Caco-2 (cell line): ENCODE measurements at regions of chr10 and their contacts with region 1.

Region 1: DNA sequence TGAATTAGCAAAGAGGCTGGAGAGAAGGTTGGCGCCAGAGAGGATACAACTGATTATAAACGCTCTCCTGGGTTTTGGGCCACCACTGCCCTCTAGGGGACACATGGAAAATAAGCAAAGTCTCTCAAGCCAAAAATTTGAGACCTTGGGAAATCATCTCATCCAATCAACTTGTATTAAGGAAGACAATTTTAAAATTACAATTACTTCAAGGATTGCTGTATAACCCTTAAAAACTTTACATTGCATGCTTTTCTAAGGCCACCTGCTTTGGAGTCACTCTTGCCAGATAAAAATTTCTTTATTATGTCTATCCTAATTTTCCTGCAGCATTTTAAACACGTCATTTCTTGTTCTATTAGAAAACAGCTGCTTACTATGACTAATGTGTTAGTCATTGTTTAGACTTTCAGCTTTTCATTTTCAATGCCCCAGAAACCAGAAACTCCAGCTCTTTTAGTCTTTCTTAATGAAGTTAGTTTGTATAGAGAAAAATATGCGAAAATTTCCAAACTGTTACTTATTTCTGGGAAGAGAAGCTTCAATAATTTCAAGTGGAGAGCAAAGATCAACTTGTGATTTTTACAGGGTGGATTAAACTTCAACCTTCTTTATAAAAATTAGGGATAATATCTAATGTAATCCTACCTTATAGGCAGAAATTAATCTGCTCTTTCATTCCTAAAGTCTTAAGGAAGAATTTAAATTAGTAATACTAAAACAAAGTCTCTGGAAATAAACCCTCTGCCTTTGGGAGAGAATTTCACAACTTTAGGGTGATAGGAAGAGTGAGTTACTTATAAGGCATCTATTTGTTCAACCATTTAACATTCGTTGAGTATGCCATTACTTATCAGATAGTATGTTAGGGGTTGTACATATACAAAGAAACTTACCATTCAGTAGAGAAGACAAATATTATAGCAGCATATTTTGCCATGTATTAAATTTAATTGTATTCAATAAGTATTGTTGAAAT is 20.6 kb upstream of the RHOBTB1 start:
- DNase-seq: peak; percentile 70 to 78
- H3K4me3 ChIP-seq: no peak overlapping the region
- H3K4me3 Mint-ChIP-seq: no peak overlapping the region
- H3K27ac Mint-ChIP-seq: no peak overlapping the region
- H3K4me1 ChIP-seq: no peaks in the 10 kb centered on the region
- H3K4me1 Mint-ChIP-seq: no peaks in the 10 kb centered on the region
- H3K27me3 ChIP-seq: no peaks in the 10 kb centered on the region
- H3K27me3 Mint-ChIP-seq: peaks cover 2% of the 10 kb centered on the region
- CTCF ChIP-seq: peak; percentile 96 to 98

Region 2: DNA sequence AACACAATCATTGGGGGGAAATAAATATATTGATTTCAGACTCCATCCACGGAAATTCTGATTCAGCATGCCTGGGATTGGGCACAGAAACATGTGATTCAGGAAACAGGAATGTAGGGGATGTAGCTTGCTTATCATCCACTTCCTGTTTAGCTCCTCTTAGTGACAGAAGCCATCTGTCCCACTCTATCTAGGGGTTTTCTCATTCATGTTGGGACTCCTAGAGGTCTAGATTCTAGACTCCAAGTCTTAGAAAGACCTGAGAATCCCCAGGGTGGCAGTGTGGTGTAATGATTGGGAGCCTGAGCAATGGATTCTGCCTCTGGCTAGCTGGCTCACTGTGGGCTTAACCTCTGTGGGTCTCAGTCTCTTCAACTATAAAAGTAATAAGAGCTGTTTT is 118.4 kb before region 1 on chr10:
- CTCF ChIA-PET with region 1: interaction called, 4 read pairs
- POLR2A ChIA-PET with region 1: no interaction called
- intact Hi-C with region 1: loop called (anchors 1 kb)
- DNase-seq: no peak
- H3K4me3 ChIP-seq: no peak overlapping the region
- H3K4me3 Mint-ChIP-seq: no peak overlapping the region
- H3K27ac Mint-ChIP-seq: no peak overlapping the region
- H3K4me1 ChIP-seq: no peaks in the 10 kb centered on the region
- H3K4me1 Mint-ChIP-seq: no peaks in the 10 kb centered on the region
- H3K27me3 ChIP-seq: no peaks in the 10 kb centered on the region; the same call in 1 of the 2 replicates
- H3K27me3 Mint-ChIP-seq: peaks cover 3% of the 10 kb centered on the region
- CTCF ChIP-seq: no peak

Region 3: DNA sequence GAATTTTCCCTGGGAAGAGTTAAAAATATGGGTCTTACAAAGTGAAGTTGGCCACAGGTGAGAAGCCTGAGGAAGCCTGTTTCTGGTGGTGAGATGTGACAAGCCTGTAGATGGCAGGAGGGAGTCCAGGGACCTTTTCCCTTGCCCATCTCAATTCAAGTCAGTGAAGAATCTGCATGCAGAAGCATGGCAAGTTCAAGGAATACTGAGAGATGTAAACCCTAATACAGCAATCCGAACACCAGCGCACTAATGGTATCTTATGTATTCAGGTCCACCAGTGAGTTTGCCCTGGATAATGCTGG is 94.2 kb before region 1 on chr10:
- CTCF ChIA-PET with region 1: no interaction called
- POLR2A ChIA-PET with region 1: no interaction called
- intact Hi-C with region 1: loop called (anchors 1 kb)
- DNase-seq: peak in 1 of 2 experiments; percentile 35
- H3K4me3 ChIP-seq: no peak overlapping the region
- H3K4me3 Mint-ChIP-seq: no peak overlapping the region
- H3K27ac Mint-ChIP-seq: no peak overlapping the region
- H3K4me1 ChIP-seq: no peaks in the 10 kb centered on the region
- H3K4me1 Mint-ChIP-seq: no peaks in the 10 kb centered on the region
- H3K27me3 ChIP-seq: no peaks in the 10 kb centered on the region
- H3K27me3 Mint-ChIP-seq: peaks cover 4% of the 10 kb centered on the region
- CTCF ChIP-seq: peak; percentile 44 to 73

Region 4: GRCh38 chr10:60883187-60883586 is 81.4 kb before region 1 on chr10:
- CTCF ChIA-PET with region 1: interaction called, 3 read pairs
- POLR2A ChIA-PET with region 1: no interaction called
- intact Hi-C with region 1: loop called (anchors 1 kb)
- DNase-seq: peak; percentile 54 to 64
- H3K4me3 ChIP-seq: no peak overlapping the region
- H3K4me3 Mint-ChIP-seq: no peak overlapping the region
- H3K27ac Mint-ChIP-seq: no peak overlapping the region
- H3K4me1 ChIP-seq: no peaks in the 10 kb centered on the region
- H3K4me1 Mint-ChIP-seq: no peaks in the 10 kb centered on the region
- H3K27me3 ChIP-seq: no peaks in the 10 kb centered on the region
- H3K27me3 Mint-ChIP-seq: no peaks in the 10 kb centered on the region
- CTCF ChIP-seq: peak; percentile 72 to 88

Region 5: GRCh38 chr10:61503051-61503450 is 538.5 kb after region 1 on chr10:
- CTCF ChIA-PET with region 1: no interaction called
- POLR2A ChIA-PET with region 1: no interaction called
- intact Hi-C with region 1: no loop called
- DNase-seq: no peak
- H3K4me3 ChIP-seq: no peak overlapping the region
- H3K4me3 Mint-ChIP-seq: no peak overlapping the region
- H3K27ac Mint-ChIP-seq: no peak overlapping the region
- H3K4me1 ChIP-seq: no peaks in the 10 kb centered on the region
- H3K4me1 Mint-ChIP-seq: no peaks in the 10 kb centered on the region
- H3K27me3 ChIP-seq: no peaks in the 10 kb centered on the region; the same call in 1 of the 2 replicates
- H3K27me3 Mint-ChIP-seq: peaks cover 32% of the 10 kb centered on the region
- CTCF ChIP-seq: no peak